Gastrocnemius medialis (tissue), 4 donors: ENCODE measurements at regions of chr5 and their contacts with region 1.

Region 1: GRCh38 chr5:127785098-127785927 is 82.1 kb downstream of the CCDC192 start:
- DNase-seq: no peak
- ATAC-seq: no peak
- H3K4me3 ChIP-seq: no peak overlapping the region
- H3K27ac ChIP-seq: no peak overlapping the region
- H3K4me1 ChIP-seq: no peaks in the 10 kb centered on the region
- H3K27me3 ChIP-seq: no peaks in the 10 kb centered on the region
- CTCF ChIP-seq: no peak
- POLR2A ChIP-seq: no peak

Region 2: GRCh38 chr5:129496421-129496820 is 1711.1 kb after region 1 on chr5:
- in situ Hi-C with region 1: no loop called
- intact Hi-C with region 1: loop called (anchors 5 kb)
- DNase-seq: no peak
- ATAC-seq: no peak
- H3K4me3 ChIP-seq: no peak overlapping the region
- H3K27ac ChIP-seq: no peak overlapping the region
- H3K4me1 ChIP-seq: peaks cover 3 to 11% of the 10 kb centered on the region in 2 donors
- H3K27me3 ChIP-seq: no peaks in the 10 kb centered on the region
- CTCF ChIP-seq: no peak
- POLR2A ChIP-seq: no peak